ENCODE measurements at regions of chr3 and their contacts with region 1.

Region 1: GRCh38 chr3:35664460-35664919 is 25.2 kb downstream of the ARPP21 start:
- DNase-seq: peak; percentile 80 to 94
- ATAC-seq: peak; percentile 77 to 81
- H3K4me3 ChIP-seq: peak overlapping the region; percentile 48 to 56 (median 52)
- H3K27ac ChIP-seq: peak overlapping the region; percentile 81 to 95 (median 94)
- H3K4me1 ChIP-seq: peaks cover 69 to 72% of the 10 kb centered on the region in 2 donors
- H3K27me3 ChIP-seq: no peaks in the 10 kb centered on the region
- CTCF ChIP-seq: no peak
- POLR2A ChIP-seq: peak in 1 of 2 donors; percentile 21

Region 2: DNA sequence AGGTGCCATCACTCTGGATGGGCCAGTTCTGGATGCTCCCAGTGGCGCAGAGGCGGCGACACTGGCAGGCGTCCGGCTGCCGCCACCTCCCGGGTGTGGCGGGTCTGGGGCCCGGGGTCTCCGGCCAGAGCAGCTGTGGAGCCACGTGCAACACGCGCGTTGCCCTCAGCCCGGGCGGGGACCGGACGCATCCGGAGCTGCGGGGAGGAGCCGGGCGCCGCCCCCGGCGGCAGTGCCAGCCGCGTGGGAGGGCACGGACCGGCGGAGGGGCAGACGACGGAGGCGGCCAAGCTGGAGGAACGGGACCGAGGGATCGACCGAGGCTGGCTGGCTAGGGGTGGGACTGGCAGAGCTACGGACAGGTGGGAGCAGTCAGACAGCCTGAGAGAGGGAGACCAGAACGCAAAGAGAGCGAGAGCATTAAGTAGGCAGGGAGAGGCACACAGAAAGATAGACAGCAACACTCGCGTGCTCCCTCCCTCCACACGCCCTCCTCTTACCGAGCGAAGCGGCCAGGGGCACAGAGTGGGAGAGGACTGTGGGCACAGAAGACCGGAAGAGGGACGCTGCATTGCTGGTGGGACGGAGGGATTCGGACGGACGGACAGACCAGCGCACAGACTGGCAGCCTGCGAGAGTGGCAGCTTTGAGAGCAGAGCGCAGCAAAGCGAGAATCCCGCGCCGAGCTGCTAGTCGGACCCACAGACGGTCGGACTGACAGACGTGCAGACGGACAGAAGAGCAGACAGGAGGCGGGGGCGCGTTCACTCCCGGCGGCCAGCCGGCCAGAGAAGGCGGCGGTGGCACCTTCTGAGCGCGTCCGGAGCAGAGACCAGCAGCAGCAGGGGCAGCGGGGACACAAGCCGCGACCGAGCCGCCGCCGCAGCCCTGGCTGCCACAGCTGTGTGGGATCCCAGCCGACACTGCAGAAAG is 25.0 kb before region 1 on chr3 and contains the start of gene ARPP21:
- in situ Hi-C with region 1: no loop called
- intact Hi-C with region 1: loop called (anchors 2 kb)
- DNase-seq: peak; percentile 58 to 68
- ATAC-seq: peak; percentile 64 to 71
- H3K4me3 ChIP-seq: peak within 1 kb of the TSS; percentile 67 to 77 (median 74)
- H3K27ac ChIP-seq: peak within 1 kb of the TSS; percentile 88 to 94 (median 92)
- H3K4me1 ChIP-seq: no peaks in the 10 kb centered on the region
- H3K27me3 ChIP-seq: no peaks in the 10 kb centered on the region
- CTCF ChIP-seq: no peak
- POLR2A ChIP-seq: peak; percentile 59 to 77
- total RNA-seq, gene ARPP21: 58.7 to 93.8 (median 67.5) TPM

Region 3: GRCh38 chr3:36312351-36312750 is 647.9 kb after region 1 on chr3:
- in situ Hi-C with region 1: no loop called
- intact Hi-C with region 1: no loop called
- DNase-seq: no peak
- ATAC-seq: no peak
- H3K4me3 ChIP-seq: no peak overlapping the region
- H3K27ac ChIP-seq: no peak overlapping the region
- H3K4me1 ChIP-seq: no peaks in the 10 kb centered on the region
- H3K27me3 ChIP-seq: no peaks in the 10 kb centered on the region
- CTCF ChIP-seq: no peak
- POLR2A ChIP-seq: no peak

Measured in gastrocnemius medialis (tissue), 4 donors.